Left colon (tissue), 2 donors: ENCODE measurements at regions of chr15 and their contacts with region 1.

Region 1: GRCh38 chr15:92521624-92522008 is 127.9 kb downstream of the ST8SIA2 start:
- DNase-seq: peak; percentile 66 to 75
- ATAC-seq: peak; percentile 93

Region 2: DNA sequence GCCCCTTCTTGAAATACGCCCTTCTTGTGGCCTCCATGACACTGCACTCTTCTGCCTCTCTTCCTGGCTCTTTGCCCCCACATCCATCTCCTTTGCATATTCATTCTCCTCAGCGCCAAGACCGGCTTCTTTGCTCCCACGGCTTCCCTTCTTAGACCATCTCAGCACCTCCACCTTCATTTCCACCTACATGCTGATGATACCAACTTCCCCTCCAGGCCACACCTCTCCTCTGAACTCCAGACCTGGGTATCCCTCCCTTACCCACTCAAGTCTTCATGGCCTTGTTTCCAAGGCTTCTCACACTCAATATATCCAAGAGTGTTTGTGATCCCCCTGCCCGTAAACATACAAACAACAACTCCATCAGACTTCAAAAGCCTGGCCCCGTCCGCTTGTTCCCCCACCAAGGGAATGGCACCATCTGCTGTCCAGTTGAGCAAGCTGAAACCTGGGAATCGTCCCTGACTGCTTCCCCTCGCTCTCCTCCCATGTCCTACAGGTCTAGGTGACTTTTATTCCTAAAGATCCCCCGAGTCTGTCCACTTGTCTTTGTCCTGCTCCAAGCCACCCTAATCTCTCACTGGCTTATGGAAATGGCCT is 161.7 kb after region 1 on chr15:
- intact Hi-C with region 1: loop called in 1 of 2 experiments (anchors 10 kb)
- DNase-seq: peak in 1 of 2 donors; percentile 36
- ATAC-seq: peak; percentile 53

Region 3: GRCh38 chr15:92714477-92715401 is 193.1 kb after region 1 on chr15:
- intact Hi-C with region 1: loop called in 1 of 2 experiments (anchors 2 kb)
- DNase-seq: peak; percentile 33 to 71
- ATAC-seq: peak; percentile 86